ENCODE measurements at regions of chr13 and their contacts with region 1.

Region 1: DNA sequence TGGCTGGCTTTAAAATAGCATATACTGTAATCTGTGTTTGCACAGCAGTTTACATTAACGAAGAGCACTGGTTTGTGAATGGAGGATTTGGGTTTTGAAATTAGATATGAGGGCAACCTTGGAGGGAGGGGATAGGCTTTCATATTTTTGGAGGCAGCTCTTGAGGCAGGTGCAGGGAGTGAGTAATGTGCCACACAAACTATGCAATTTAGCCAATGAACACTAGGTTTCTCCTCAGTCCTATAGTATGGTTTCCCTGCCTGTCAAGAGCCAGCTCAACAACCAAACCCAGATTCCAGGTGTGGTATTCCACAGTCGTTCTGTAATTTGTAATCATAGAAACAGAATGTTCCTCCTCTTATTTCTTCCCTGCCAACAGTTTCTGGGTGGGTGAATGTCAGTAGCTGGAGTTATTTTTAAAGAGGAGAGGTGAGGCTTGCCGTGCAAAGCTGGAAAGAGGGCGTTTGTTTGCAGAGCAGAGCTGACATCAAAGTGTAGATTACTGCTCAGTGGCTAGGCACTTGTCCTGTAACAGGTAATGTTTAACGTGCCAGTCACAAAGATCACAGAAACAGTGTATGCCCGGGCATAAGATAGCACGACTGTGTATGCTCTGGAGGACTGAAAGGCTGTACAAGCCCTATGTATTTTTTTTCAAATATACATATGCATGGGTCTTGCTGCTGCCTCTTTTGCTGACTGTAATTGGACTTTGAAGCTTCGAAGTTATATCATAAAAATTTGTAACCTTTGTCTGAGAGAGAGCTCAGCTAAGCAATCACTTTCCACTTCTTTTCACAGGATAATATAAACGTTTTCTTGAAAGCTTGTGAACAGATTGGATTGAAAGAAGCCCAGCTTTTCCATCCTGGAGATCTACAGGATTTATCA is 124.2 kb downstream of the LMO7 start:
- DNase-seq: no peak
- CTCF ChIP-seq: no peak

Region 2: GRCh38 chr13:75749407-75749806 is 11.0 kb before region 1 on chr13:
- CTCF ChIA-PET with region 1: interaction called, 16 read pairs
- POLR2A ChIA-PET with region 1: interaction called, 3 read pairs
- DNase-seq: no peak
- CTCF ChIP-seq: no peak

Region 3: DNA sequence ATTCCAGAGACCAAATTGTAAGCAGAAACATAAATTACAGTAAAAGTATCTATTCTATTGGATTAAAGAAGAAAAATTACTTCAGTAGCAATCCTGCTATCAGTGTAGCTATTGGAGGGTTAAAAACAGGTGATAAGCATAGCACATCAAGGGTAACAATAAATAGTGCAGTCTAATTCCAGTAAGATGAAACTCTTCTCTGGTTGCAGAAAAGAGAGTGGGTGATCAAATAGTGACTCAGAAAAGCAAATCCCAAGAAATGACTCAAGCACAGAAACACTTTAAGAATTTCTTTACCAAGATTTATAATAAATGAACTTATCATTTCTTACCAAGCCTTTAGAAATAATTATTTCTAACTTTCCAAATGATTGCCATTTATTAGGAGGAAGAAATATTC is 11.4 kb after region 1 on chr13:
- CTCF ChIA-PET with region 1: interaction called, 24 read pairs
- POLR2A ChIA-PET with region 1: no interaction called
- DNase-seq: no peak
- CTCF ChIP-seq: no peak

Region 4: DNA sequence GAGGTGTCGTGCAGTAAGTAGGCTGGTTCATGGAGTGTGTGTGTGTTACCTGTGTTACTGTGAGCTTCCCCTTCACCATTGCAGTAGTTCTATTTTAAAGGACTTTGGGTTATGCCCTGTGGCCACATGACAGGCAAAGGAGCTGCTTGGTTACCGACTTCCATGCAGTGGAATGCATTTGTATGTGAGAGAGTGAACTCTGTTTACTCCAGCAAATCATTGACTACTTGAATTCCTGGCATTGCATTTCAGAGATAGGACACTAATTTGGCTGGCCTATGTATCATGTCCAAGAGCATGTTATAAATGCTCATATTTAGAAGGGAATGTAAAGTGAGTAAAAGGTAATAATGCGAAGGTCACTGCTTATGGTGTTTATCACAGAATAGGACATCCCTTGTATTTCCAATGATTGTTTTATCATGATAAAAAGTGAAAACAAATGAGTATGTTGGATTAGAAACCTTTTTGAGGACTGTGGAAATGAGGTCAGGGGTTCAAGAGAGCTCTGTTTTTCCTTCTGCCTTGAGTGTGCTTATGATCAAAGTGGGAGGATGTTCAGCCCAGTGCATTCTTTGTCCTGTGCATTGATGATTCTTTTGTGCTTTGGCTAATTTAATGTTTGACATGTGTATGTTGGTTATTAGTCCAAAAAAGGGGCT is 32.3 kb after region 1 on chr13:
- CTCF ChIA-PET with region 1: interaction called, 35 read pairs
- POLR2A ChIA-PET with region 1: no interaction called
- DNase-seq: no peak
- CTCF ChIP-seq: no peak

Measured in GM10248 (cell line).